ENCODE measurements at regions of chr4 and their contacts with region 1.

Region 1: GRCh38 chr4:102734591-102735385 is 26.0 kb downstream of the MANBA start:
- DNase-seq: no peak
- H3K4me3 ChIP-seq: no peak overlapping the region
- H3K27ac ChIP-seq: no peak overlapping the region
- H3K4me1 ChIP-seq: 0 out of 7 replicates have a peak, but pooled peaks cover 0 to 2% (median 0%) of the 10 kb centered on the region in 4 experiments
- H3K27me3 ChIP-seq: no peaks in the 10 kb centered on the region
- CTCF ChIP-seq: no peak
- EP300 ChIP-seq: no peak
- POLR2A ChIP-seq: no peak
- RAD21 ChIP-seq: no peak

Region 2: DNA sequence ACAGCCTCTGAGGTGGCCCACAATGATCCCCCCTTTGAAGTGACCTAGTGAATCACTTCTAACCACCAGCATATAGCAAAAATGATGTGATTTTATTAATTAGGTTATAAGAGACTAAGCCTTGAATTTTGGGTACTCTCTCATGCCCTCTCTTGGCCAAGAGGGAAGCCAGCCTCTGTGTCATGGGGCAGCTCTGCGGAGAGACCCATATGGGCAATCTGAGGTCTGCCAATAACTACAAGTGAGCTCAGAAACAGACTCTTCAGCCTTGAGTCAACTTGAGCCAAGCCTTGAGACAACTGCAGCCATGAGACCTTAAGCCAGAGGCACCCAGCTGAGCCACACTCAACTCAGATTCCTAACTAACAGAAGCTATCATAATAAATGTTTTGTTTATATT is 19.7 kb before region 1 on chr4:
- CTCF ChIA-PET with region 1: interaction called, 11 read pairs
- POLR2A ChIA-PET with region 1: no interaction called
- DNase-seq: no peak
- H3K4me3 ChIP-seq: no peak overlapping the region
- H3K27ac ChIP-seq: no peak overlapping the region
- H3K4me1 ChIP-seq: no peaks in the 10 kb centered on the region
- H3K27me3 ChIP-seq: no peaks in the 10 kb centered on the region
- CTCF ChIP-seq: peak in 1 of 3 experiments; percentile 21; a peak in 1 of 4 replicates
- EP300 ChIP-seq: no peak
- POLR2A ChIP-seq: no peak
- RAD21 ChIP-seq: peak; percentile 2 to 23; a peak in 1 of 4 replicates

Region 3: GRCh38 chr4:102723511-102723910 is 11.3 kb before region 1 on chr4:
- CTCF ChIA-PET with region 1: interaction called, 24 read pairs
- POLR2A ChIA-PET with region 1: no interaction called
- DNase-seq: no peak
- H3K4me3 ChIP-seq: no peak overlapping the region
- H3K27ac ChIP-seq: no peak overlapping the region
- H3K4me1 ChIP-seq: no peaks in the 10 kb centered on the region
- H3K27me3 ChIP-seq: no peaks in the 10 kb centered on the region
- CTCF ChIP-seq: no peak
- EP300 ChIP-seq: no peak
- POLR2A ChIP-seq: no peak
- RAD21 ChIP-seq: no peak

Region 4: GRCh38 chr4:102751941-102752340 is 17.2 kb after region 1 on chr4:
- CTCF ChIA-PET with region 1: interaction called, 10 read pairs
- POLR2A ChIA-PET with region 1: no interaction called
- DNase-seq: no peak
- H3K4me3 ChIP-seq: no peak overlapping the region
- H3K27ac ChIP-seq: no peak overlapping the region
- H3K4me1 ChIP-seq: no peaks in the 10 kb centered on the region
- H3K27me3 ChIP-seq: no peaks in the 10 kb centered on the region
- CTCF ChIP-seq: no peak
- EP300 ChIP-seq: no peak
- POLR2A ChIP-seq: no peak
- RAD21 ChIP-seq: no peak

Region 5: GRCh38 chr4:102799816-102800215 is 65.0 kb after region 1 on chr4:
- CTCF ChIA-PET with region 1: interaction called, 11 read pairs
- POLR2A ChIA-PET with region 1: no interaction called
- DNase-seq: no peak
- H3K4me3 ChIP-seq: no peak overlapping the region
- H3K27ac ChIP-seq: no peak overlapping the region
- H3K4me1 ChIP-seq: peaks cover 0 to 3% (median 1%) of the 10 kb centered on the region in 4 experiments; a peak in 1 of 7 replicates
- H3K27me3 ChIP-seq: no peaks in the 10 kb centered on the region
- CTCF ChIP-seq: no peak
- EP300 ChIP-seq: no peak
- POLR2A ChIP-seq: no peak
- RAD21 ChIP-seq: no peak

Region 6: GRCh38 chr4:103008875-103009729 is 274.3 kb after region 1 on chr4:
- CTCF ChIA-PET with region 1: interaction called, 18 read pairs
- POLR2A ChIA-PET with region 1: no interaction called
- DNase-seq: no peak
- H3K4me3 ChIP-seq: no peak overlapping the region
- H3K27ac ChIP-seq: no peak overlapping the region
- H3K4me1 ChIP-seq: no peaks in the 10 kb centered on the region
- H3K27me3 ChIP-seq: no peaks in the 10 kb centered on the region
- CTCF ChIP-seq: peak in 2 of 3 experiments; percentile 58 to 76; a peak in 2 of 4 replicates
- EP300 ChIP-seq: no peak
- POLR2A ChIP-seq: no peak
- RAD21 ChIP-seq: peak; percentile 91 to 97